ENCODE measurements at regions of chr20 and their contacts with region 1.

Region 1: DNA sequence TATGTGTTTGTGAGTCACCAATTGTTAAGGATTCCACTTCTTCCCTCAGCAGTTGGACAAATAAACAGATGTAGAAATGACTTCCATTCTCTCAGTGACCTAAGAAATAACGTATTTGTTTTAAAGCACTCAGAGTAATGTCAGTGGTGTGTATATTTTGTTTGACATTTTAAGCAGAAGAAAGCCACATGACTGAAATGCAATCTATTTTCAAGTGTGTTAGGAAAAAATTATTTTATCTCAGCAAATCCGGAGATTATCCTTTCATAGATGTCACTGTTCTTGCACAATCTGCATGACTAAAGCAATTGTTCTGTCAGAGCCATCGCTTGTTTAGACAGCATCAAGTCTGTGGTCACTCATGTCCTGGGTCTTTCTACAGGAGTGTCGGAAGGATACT is 77.1 kb downstream of the JAG1 start:
- DNase-seq: no peak
- H3K4me3 ChIP-seq: no peak overlapping the region
- H3K27ac ChIP-seq: no peak overlapping the region
- H3K4me1 ChIP-seq: peaks cover 38% of the 10 kb centered on the region
- H3K27me3 ChIP-seq: no peaks in the 10 kb centered on the region
- CTCF ChIP-seq: no peak

Region 2: GRCh38 chr20:10550204-10551118 is 46.3 kb before region 1 on chr20:
- CTCF ChIA-PET with region 1: no interaction called
- POLR2A ChIA-PET with region 1: no interaction called
- intact Hi-C with region 1: no loop called
- DNase-seq: no peak
- H3K4me3 ChIP-seq: no peak overlapping the region
- H3K27ac ChIP-seq: no peak overlapping the region
- H3K4me1 ChIP-seq: peaks cover 4% of the 10 kb centered on the region
- H3K27me3 ChIP-seq: no peaks in the 10 kb centered on the region
- CTCF ChIP-seq: no peak

Region 3: GRCh38 chr20:10565922-10566897 is 30.5 kb before region 1 on chr20:
- CTCF ChIA-PET with region 1: interaction called, 4 read pairs
- POLR2A ChIA-PET with region 1: no interaction called
- intact Hi-C with region 1: loop called (anchors 1 kb)
- DNase-seq: peak in 1 of 2 experiments; percentile 43
- H3K4me3 ChIP-seq: no peak overlapping the region
- H3K27ac ChIP-seq: peak overlapping the region; percentile 89
- H3K4me1 ChIP-seq: peaks cover 23% of the 10 kb centered on the region
- H3K27me3 ChIP-seq: no peaks in the 10 kb centered on the region
- CTCF ChIP-seq: no peak

Region 4: DNA sequence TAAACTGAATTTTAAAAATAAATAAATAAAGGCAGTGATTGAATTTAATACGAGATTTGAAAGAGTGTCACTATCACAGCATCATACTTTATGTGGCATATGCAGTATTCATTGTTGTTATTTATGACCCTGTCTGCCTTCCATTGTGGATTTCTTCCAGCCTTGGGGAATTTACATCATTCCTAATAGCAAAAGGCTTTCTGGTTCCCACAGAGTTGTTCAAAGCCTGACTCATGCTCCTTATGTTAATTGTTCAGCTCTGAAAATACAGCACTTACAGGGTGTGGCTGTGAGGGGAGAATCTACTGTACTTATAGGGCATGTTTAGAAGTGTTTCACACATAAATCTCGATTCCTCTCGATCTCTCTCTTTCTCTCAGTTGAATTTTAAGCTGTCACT is 22.7 kb after region 1 on chr20:
- CTCF ChIA-PET with region 1: no interaction called
- POLR2A ChIA-PET with region 1: no interaction called
- intact Hi-C with region 1: loop called (anchors 2 kb)
- DNase-seq: peak in 1 of 2 experiments; percentile 64
- H3K4me3 ChIP-seq: no peak overlapping the region
- H3K27ac ChIP-seq: peak overlapping the region; percentile 81
- H3K4me1 ChIP-seq: peaks cover 11% of the 10 kb centered on the region
- H3K27me3 ChIP-seq: no peaks in the 10 kb centered on the region
- CTCF ChIP-seq: no peak

Region 5: DNA sequence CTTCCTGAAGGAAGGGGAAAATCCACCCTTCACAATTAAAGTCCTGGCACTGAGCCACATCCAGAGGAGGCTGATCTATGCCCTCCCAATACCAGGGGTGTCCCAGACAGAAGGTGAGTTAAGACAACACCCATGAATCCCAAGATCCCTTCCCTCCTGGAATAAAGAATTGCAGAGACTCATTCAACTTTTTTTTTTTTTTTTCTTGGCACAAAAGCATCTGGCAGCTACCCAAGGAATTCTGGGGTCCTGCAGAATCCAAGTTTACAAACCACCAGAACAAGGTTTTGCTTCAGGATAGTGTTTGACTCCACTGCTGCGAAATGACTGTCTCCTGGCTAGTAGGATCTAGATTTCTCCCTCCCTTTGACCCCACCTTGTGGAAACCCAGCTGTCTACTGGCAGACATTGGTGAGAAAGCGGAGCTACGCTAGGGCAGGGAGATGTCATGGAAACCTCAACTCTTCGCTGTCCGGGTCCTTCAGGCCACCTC is 39.6 kb after region 1 on chr20:
- CTCF ChIA-PET with region 1: no interaction called
- POLR2A ChIA-PET with region 1: no interaction called
- intact Hi-C with region 1: loop called (anchors 5 kb)
- DNase-seq: no peak
- H3K4me3 ChIP-seq: no peak overlapping the region
- H3K27ac ChIP-seq: no peak overlapping the region
- H3K4me1 ChIP-seq: no peaks in the 10 kb centered on the region
- H3K27me3 ChIP-seq: no peaks in the 10 kb centered on the region
- CTCF ChIP-seq: no peak

Region 6: DNA sequence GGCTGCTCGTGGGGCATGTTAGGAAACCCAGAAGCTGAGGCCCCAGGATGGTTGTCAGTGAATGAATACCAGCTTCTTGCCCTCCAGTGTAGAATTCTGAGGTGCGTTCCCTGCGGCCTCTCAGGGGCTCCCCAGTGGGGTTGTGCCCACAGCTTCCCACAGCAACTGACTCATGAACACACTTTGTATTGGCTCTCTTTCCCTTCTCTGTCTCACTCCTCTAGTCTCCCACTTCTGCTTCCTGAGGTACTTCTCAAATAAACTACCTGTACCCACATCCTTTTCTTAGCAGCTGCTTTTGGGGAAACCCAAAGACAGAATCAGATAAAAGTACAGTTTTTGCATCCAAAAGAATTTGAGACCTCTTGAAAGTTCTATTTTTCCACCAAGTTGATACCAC is 184.8 kb after region 1 on chr20:
- CTCF ChIA-PET with region 1: no interaction called
- POLR2A ChIA-PET with region 1: no interaction called
- intact Hi-C with region 1: no loop called
- DNase-seq: no peak
- H3K4me3 ChIP-seq: no peak overlapping the region
- H3K27ac ChIP-seq: no peak overlapping the region
- H3K4me1 ChIP-seq: no peaks in the 10 kb centered on the region
- H3K27me3 ChIP-seq: no peaks in the 10 kb centered on the region
- CTCF ChIP-seq: no peak

Region 7: GRCh38 chr20:10876558-10876957 is 279.8 kb after region 1 on chr20:
- CTCF ChIA-PET with region 1: no interaction called
- POLR2A ChIA-PET with region 1: no interaction called
- intact Hi-C with region 1: no loop called
- DNase-seq: no peak
- H3K4me3 ChIP-seq: no peak overlapping the region
- H3K27ac ChIP-seq: no peak overlapping the region
- H3K4me1 ChIP-seq: no peaks in the 10 kb centered on the region
- H3K27me3 ChIP-seq: no peaks in the 10 kb centered on the region
- CTCF ChIP-seq: no peak

Region 8: DNA sequence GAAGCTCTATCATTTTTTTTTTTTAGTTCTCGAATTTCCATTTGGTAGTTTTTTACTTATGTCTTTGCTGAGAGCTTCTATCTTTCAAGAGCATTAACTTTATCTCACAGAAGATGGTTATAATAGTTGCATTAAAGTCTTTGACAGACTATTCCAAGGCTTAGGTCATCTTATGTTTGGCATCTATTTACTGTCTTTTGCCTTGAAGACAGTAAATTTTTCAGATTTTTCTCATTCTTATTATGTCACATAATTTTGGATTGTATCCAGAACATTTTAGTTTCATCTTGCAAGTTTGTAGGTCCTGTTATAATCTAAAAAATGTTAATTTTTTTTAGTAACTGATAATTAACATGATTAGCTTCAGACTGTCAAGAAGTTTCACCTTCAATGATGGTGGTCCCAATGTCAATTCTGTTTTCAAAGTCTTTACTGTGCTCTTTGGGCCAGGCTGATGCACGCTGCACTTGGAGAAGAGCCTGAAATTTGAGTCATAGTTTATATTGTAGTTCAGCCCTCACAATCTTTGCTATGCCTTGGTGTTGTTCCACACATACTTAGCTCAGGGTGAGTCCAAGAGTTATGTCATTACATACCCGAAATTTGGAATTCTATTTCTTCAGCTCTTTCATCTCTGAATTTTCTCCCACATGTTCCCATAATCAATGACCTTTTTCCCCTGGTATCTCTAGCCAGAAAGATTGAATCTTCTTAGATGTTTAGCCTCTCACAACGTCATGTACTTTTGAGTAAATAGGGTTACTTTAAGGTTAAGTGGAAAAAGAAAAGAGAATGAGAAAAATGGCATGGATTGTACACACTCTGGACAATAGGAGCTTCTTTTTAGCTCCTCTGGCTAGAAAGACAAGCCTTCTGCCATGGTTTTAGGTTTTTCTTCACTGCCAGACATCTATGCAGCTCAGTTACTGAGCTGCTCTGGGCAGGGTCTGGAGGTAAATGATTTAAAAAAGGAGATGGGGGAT is 1210.6 kb after region 1 on chr20:
- CTCF ChIA-PET with region 1: no interaction called
- POLR2A ChIA-PET with region 1: no interaction called
- intact Hi-C with region 1: no loop called
- DNase-seq: peak in 1 of 2 experiments; percentile 64
- H3K4me3 ChIP-seq: no peak overlapping the region
- H3K27ac ChIP-seq: no peak overlapping the region
- H3K4me1 ChIP-seq: peaks cover 32% of the 10 kb centered on the region
- H3K27me3 ChIP-seq: no peaks in the 10 kb centered on the region
- CTCF ChIP-seq: no peak

Measured in PC-9 (cell line).